Kidney (tissue), 22 donors: ENCODE measurements at regions of chr2 and their contacts with region 1.

Region 1: DNA sequence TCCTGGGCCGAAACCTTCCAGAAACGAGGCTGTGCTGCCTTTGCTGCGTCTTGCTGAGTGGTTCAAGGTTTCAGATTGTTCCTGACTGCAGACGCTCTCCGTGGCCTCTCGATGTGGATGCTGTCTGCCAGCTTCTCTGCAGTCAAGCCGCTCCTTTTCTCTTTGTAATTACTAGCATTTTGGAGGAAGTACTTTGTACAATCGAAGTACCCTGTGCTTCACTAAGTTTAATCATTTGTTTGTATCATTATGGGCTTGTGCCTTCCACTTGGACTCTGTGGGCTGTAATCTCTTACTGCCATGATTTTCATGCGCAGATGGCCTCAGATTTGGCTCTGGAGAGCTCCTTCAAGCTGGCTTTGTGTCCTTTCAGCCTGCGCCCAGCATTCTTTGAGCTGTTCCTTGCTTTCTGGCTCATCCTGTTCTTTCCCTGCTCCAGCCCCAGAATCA is 49.3 kb downstream of the TRAF3IP1 start:
- DNase-seq: no peak
- H3K4me3 ChIP-seq: no peak overlapping the region
- H3K27ac ChIP-seq: no peak overlapping the region
- H3K4me1 ChIP-seq: no peaks in the 10 kb centered on the region
- H3K27me3 ChIP-seq: no peaks in the 10 kb centered on the region
- CTCF ChIP-seq: no peak

Region 2: DNA sequence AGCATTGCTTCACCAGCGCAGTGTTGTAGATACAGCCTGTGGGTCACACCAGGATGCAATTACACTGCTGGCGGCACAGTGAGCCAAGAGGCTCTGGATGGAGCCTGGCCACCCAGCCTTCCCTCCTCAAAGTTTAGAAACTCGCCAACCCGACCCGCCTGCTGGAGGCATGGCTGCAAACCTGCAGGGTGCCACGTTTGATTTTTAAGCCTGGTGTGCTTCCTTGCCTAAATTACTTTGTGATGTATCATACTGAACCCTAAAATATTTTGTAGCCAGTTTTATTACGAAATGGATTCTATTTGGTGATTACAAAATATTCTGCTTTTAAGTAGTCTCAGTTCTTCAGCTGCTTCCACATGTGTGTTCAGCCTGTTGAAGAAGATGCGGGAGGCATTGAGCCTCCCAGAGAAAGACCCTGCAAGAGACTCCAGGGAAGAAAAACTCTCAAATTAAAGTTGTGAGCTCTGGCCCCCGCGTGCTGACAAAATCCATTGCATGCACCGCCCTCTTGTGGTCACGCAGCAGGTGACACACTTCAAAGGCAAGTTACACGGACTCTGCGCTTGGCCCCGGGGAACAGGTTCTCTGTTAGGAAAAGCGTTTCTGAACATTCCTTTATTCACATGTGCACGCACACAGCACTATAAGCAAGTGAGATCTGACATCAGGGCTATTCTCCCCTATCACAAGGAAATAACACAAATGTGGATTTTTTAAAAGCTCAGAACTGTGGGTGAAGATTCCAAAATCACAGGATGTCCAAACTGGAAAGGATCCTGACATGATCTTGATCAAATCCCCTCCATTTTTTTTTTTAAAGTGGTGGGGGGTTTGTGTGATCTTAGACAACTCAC is 415.3 kb after region 1 on chr2:
- intact Hi-C with region 1: loop called (anchors 10 kb)
- DNase-seq: peak in 4 of 5 donors; percentile 78 to 86 (median 81)
- H3K4me3 ChIP-seq: no peak overlapping the region
- H3K27ac ChIP-seq: no peak overlapping the region
- H3K4me1 ChIP-seq: no peaks in the 10 kb centered on the region
- H3K27me3 ChIP-seq: no peaks in the 10 kb centered on the region
- CTCF ChIP-seq: peak; percentile 89